Activated CD4-positive, alpha-beta T cell treated with anti-CD3 and anti-CD28 coated beads for 36 hours (primary cell): ENCODE measurements at regions of chr6 and their contacts with region 1.

Region 1: GRCh38 chr6:70686548-70687133 is 19.0 kb downstream of the SMAP1 start:
- DNase-seq: no peak
- ATAC-seq: no peak
- H3K4me3 Mint-ChIP-seq: no peak overlapping the region
- H3K27ac Mint-ChIP-seq: no peak overlapping the region
- H3K4me1 Mint-ChIP-seq: peaks cover 38% of the 10 kb centered on the region
- H3K27me3 Mint-ChIP-seq: no peaks in the 10 kb centered on the region

Region 2: DNA sequence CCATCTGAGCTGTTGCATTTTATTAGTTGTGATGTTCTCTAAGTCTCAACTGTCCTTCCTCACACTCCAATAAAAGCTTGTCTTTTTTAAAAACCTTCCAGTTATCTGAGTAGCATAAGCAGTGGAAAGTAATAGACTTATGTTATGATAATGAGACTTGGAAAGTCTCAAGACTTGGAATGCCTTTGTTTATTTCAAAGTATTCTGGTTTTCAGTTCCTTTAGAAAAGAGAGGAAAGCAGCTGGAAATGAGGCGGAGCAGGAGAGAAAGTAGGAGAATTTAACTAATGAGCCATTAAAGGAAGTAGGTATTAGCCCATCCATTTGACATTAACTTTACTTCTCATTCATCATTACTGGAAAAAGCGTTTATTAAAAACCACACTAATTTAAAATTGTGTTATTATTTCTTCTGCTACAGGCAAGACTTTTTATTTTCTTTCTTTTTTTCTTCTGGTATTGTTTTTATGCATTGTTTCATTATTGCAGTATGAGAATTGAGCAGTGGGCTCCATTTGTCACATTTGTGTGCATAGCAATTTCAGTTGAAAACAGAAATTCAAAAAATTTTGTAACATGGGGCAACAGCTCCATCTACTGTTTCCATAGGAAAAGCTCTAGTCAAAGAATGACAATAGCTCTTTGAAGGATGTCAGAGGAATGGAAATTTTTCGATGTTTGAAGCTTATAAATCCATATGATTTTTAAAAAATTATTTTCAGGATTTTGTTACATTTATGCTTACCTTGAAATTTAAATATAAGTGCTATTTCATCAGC is 578.6 kb before region 1 on chr6:
- CTCF ChIA-PET with region 1: no interaction called
- POLR2A ChIA-PET with region 1: no interaction called
- intact Hi-C with region 1: no loop called
- DNase-seq: no peak
- ATAC-seq: no peak
- H3K4me3 Mint-ChIP-seq: no peak overlapping the region
- H3K27ac Mint-ChIP-seq: no peak overlapping the region
- H3K4me1 Mint-ChIP-seq: no peaks in the 10 kb centered on the region
- H3K27me3 Mint-ChIP-seq: peaks cover 8% of the 10 kb centered on the region

Region 3: GRCh38 chr6:70369332-70369950 is 317.2 kb before region 1 on chr6:
- CTCF ChIA-PET with region 1: interaction called, 10 read pairs
- POLR2A ChIA-PET with region 1: no interaction called
- intact Hi-C with region 1: loop called (anchors 1 to 2 kb)
- DNase-seq: peak; percentile 79
- ATAC-seq: peak; percentile 84
- H3K4me3 Mint-ChIP-seq: no peak overlapping the region
- H3K27ac Mint-ChIP-seq: no peak overlapping the region
- H3K4me1 Mint-ChIP-seq: no peaks in the 10 kb centered on the region
- H3K27me3 Mint-ChIP-seq: peaks cover 12% of the 10 kb centered on the region

Region 4: GRCh38 chr6:70413114-70413991 is 273.3 kb before region 1 on chr6 and contains the start of gene FAM135A:
- CTCF ChIA-PET with region 1: no interaction called
- POLR2A ChIA-PET with region 1: no interaction called
- intact Hi-C with region 1: loop called in 1 of 2 experiments (anchors 5 kb)
- DNase-seq: peak; percentile 99
- ATAC-seq: peak; percentile 95
- H3K4me3 Mint-ChIP-seq: peak within 1 kb of the TSS; percentile 82
- H3K27ac Mint-ChIP-seq: peak within 1 kb of the TSS; percentile 89
- H3K4me1 Mint-ChIP-seq: peaks cover 26% of the 10 kb centered on the region
- H3K27me3 Mint-ChIP-seq: peaks cover 2% of the 10 kb centered on the region
- total RNA-seq, gene FAM135A: 7.6 to 7.8 TPM

Region 5: DNA sequence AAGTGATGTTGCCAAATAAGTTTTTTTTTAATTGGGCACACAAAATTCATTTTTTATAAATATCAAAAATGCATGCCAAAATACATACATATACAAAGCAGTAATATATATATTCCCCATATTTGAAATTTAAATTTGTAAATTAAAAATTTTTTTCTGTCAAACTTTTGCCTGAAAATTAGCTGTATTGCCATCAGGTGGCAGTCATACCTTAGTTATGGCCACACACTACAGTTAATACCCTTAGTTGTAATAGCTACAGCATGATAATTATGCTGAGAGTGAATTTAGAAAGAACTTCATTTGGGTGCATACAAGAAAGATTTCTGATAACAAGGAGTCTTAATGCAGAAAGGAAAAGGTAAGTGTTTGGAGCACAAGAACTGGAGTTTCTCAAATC is 166.1 kb before region 1 on chr6:
- CTCF ChIA-PET with region 1: interaction called, 66 read pairs
- POLR2A ChIA-PET with region 1: no interaction called
- intact Hi-C with region 1: loop called (anchors 1 kb)
- DNase-seq: no peak
- ATAC-seq: no peak
- H3K4me3 Mint-ChIP-seq: no peak overlapping the region
- H3K27ac Mint-ChIP-seq: no peak overlapping the region
- H3K4me1 Mint-ChIP-seq: peaks cover 6% of the 10 kb centered on the region
- H3K27me3 Mint-ChIP-seq: no peaks in the 10 kb centered on the region

Region 6: DNA sequence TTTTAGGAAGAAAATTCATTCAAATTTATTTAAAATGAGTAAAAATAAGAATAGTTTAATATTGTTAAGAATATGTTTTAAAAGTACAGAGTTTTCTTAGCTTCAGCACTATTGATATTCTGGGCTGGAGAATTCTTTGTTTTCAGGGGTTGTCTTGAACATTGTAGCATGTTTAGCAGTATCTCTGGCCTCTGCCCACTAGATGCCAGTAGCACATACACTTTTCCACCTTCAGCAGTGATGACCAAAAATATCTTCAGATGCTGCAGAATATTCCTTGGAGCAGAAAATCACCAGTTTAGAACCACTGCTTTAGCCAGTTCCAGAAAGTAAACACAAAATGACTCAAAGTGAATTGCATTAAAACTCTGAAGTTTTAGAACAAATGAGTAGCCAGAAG is 139.3 kb before region 1 on chr6:
- CTCF ChIA-PET with region 1: interaction called, 33 read pairs
- POLR2A ChIA-PET with region 1: no interaction called
- intact Hi-C with region 1: loop called (anchors 1 kb)
- DNase-seq: no peak
- ATAC-seq: no peak
- H3K4me3 Mint-ChIP-seq: no peak overlapping the region
- H3K27ac Mint-ChIP-seq: no peak overlapping the region
- H3K4me1 Mint-ChIP-seq: no peaks in the 10 kb centered on the region
- H3K27me3 Mint-ChIP-seq: no peaks in the 10 kb centered on the region

Region 7: GRCh38 chr6:70566751-70567382 is 119.8 kb before region 1 on chr6 and contains the start of gene SDHAF4:
- CTCF ChIA-PET with region 1: interaction called, 4 read pairs
- POLR2A ChIA-PET with region 1: no interaction called
- intact Hi-C with region 1: loop called in 1 of 2 experiments (anchors 5 kb)
- DNase-seq: peak; percentile 96
- ATAC-seq: peak; percentile 100
- H3K4me3 Mint-ChIP-seq: peak within 1 kb of the TSS; percentile 78
- H3K27ac Mint-ChIP-seq: peak within 1 kb of the TSS; percentile 82
- H3K4me1 Mint-ChIP-seq: peaks cover 16% of the 10 kb centered on the region
- H3K27me3 Mint-ChIP-seq: no peaks in the 10 kb centered on the region
- total RNA-seq, gene SDHAF4: 15.8 to 17.6 TPM

Region 8: GRCh38 chr6:70604254-70604653 is 82.4 kb before region 1 on chr6:
- CTCF ChIA-PET with region 1: no interaction called
- POLR2A ChIA-PET with region 1: no interaction called
- intact Hi-C with region 1: no loop called
- DNase-seq: no peak
- ATAC-seq: no peak
- H3K4me3 Mint-ChIP-seq: no peak overlapping the region
- H3K27ac Mint-ChIP-seq: no peak overlapping the region
- H3K4me1 Mint-ChIP-seq: peaks cover 7% of the 10 kb centered on the region
- H3K27me3 Mint-ChIP-seq: no peaks in the 10 kb centered on the region

Region 9: GRCh38 chr6:70636589-70636988 is 50.1 kb before region 1 on chr6:
- CTCF ChIA-PET with region 1: no interaction called
- POLR2A ChIA-PET with region 1: no interaction called
- intact Hi-C with region 1: no loop called
- DNase-seq: no peak
- ATAC-seq: no peak
- H3K4me3 Mint-ChIP-seq: no peak overlapping the region
- H3K27ac Mint-ChIP-seq: no peak overlapping the region
- H3K4me1 Mint-ChIP-seq: no peaks in the 10 kb centered on the region
- H3K27me3 Mint-ChIP-seq: no peaks in the 10 kb centered on the region